MCF 10A (cell line): ENCODE measurements at regions of chr11 and their contacts with region 1.

Region 1: GRCh38 chr11:57913715-57914704 is 109.7 kb upstream of the OR9Q1 start:
- DNase-seq: no peak
- H3K4me3 Mint-ChIP-seq: no peak overlapping the region
- H3K27ac Mint-ChIP-seq: no peak overlapping the region
- H3K4me1 Mint-ChIP-seq: no peaks in the 10 kb centered on the region
- H3K27me3 Mint-ChIP-seq: no peaks in the 10 kb centered on the region
- CTCF ChIP-seq: no peak

Region 2: GRCh38 chr11:57936050-57936418 is 22.0 kb after region 1 on chr11:
- CTCF ChIA-PET with region 1: no interaction called
- POLR2A ChIA-PET with region 1: no interaction called
- intact Hi-C with region 1: loop called (anchors 2 kb)
- DNase-seq: no peak
- H3K4me3 Mint-ChIP-seq: no peak overlapping the region
- H3K27ac Mint-ChIP-seq: no peak overlapping the region
- H3K4me1 Mint-ChIP-seq: no peaks in the 10 kb centered on the region
- H3K27me3 Mint-ChIP-seq: no peaks in the 10 kb centered on the region
- CTCF ChIP-seq: no peak